GM13976 (cell line): ENCODE measurements at regions of chr6 and their contacts with region 1.

Region 1: GRCh38 chr6:166275714-166276166 is 32.5 kb downstream of the PRR18 start:
- DNase-seq: peak; percentile 89
- CTCF ChIP-seq: peak; percentile 100

Region 2: GRCh38 chr6:166382933-166383801 is 107.4 kb after region 1 on chr6 and contains the start of gene MPC1:
- in situ Hi-C with region 1: loop called (anchors 10 kb)
- DNase-seq: peak; percentile 97
- CTCF ChIP-seq: peak; percentile 20